ENCODE measurements at regions of chr16 and their contacts with region 1.

Region 1: GRCh38 chr16:20866145-20866772 is 33.9 kb downstream of the DCUN1D3 start:
- DNase-seq: peak; percentile 90
- H3K4me3 ChIP-seq: no peak overlapping the region
- H3K27ac ChIP-seq: peak overlapping the region; percentile 97
- H3K4me1 ChIP-seq: peaks cover 55% of the 10 kb centered on the region
- H3K27me3 ChIP-seq: no peaks in the 10 kb centered on the region
- CTCF ChIP-seq: no peak
- POLR2A ChIP-seq: peak; percentile 42

Region 2: DNA sequence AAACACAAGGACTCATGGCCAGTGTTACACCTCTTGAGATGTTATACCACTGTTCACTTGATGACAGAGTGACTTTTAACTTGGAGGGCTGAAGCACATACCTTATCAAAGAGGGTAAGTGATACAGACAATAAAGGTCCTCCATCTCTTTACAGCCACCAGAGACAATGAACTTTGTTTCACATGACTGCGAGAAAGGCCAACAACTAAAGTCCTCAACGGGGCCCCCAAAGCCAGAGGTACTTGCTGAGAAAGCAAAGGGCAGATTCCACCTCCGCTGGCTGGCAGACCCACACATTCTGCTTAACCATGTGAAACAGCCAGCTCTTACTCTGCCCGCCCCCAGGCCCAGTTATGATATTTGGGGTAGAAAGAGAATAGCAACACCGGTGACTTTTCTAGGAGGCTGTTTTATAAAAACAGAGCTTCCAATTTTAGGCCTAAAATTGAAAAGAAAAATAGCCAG is 12.5 kb after region 1 on chr16:
- CTCF ChIA-PET with region 1: interaction called, 9 read pairs
- POLR2A ChIA-PET with region 1: no interaction called
- dilution Hi-C with region 1: no loop called
- intact Hi-C with region 1: loop called (anchors 1 kb)
- DNase-seq: no peak
- H3K4me3 ChIP-seq: no peak overlapping the region
- H3K27ac ChIP-seq: peak overlapping the region; percentile 80
- H3K4me1 ChIP-seq: peaks cover 24% of the 10 kb centered on the region
- H3K27me3 ChIP-seq: no peaks in the 10 kb centered on the region
- CTCF ChIP-seq: no peak
- POLR2A ChIP-seq: no peak

Region 3: DNA sequence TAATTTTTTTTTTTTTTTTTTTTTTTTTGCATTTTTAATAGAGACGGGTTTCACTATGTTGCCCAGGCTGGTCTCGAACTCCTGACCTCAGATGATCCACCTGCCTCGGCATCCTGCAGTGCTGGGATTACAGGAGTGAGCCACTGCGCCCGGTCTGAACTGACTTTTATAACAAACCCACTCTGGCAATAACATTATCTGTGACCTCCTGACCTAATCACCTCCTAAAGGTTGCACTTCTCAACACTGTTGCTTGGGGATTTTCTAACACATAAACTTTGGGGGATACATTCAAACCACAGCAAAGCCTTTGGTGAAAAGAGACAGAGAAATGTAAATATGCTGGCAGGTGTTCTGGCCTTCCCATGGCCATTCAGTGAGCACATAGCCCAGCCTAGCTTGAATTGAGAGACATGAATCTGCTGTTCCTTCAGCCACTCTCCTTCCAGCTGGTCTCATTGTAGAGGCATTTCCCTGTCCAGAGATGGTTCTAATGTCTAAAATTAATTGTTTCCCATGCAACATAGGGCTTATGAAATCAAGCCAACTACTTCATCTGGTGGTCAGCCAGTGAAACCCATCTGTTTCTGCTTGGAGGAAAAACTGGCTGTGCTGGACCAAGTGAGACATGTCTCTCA is 62.6 kb after region 1 on chr16:
- CTCF ChIA-PET with region 1: no interaction called
- POLR2A ChIA-PET with region 1: no interaction called
- dilution Hi-C with region 1: no loop called
- intact Hi-C with region 1: no loop called
- DNase-seq: no peak
- H3K4me3 ChIP-seq: no peak overlapping the region
- H3K27ac ChIP-seq: no peak overlapping the region
- H3K4me1 ChIP-seq: no peaks in the 10 kb centered on the region
- H3K27me3 ChIP-seq: no peaks in the 10 kb centered on the region
- CTCF ChIP-seq: no peak
- POLR2A ChIP-seq: no peak

Region 4: GRCh38 chr16:20987049-20987448 is 120.8 kb after region 1 on chr16:
- CTCF ChIA-PET with region 1: no interaction called
- POLR2A ChIA-PET with region 1: no interaction called
- dilution Hi-C with region 1: no loop called
- intact Hi-C with region 1: no loop called
- DNase-seq: no peak
- H3K4me3 ChIP-seq: no peak overlapping the region
- H3K27ac ChIP-seq: no peak overlapping the region
- H3K4me1 ChIP-seq: no peaks in the 10 kb centered on the region
- H3K27me3 ChIP-seq: no peaks in the 10 kb centered on the region
- CTCF ChIP-seq: no peak
- POLR2A ChIP-seq: no peak

Measured in endothelial cell of umbilical vein (primary cell).